ENCODE measurements at regions of chr20 and their contacts with region 1.

Region 1: GRCh38 chr20:50980851-50981713 is 22.5 kb downstream of the MOCS3 start:
- DNase-seq: peak; percentile 36 to 68 (median 54)
- H3K4me3 ChIP-seq: no peak overlapping the region
- H3K4me3 Mint-ChIP-seq: no peak overlapping the region
- H3K27ac ChIP-seq: no peak overlapping the region
- H3K27ac Mint-ChIP-seq: no peak overlapping the region
- H3K4me1 ChIP-seq: peaks cover 4% of the 10 kb centered on the region
- H3K4me1 Mint-ChIP-seq: peaks cover 3 to 6% (median 4%) of the 10 kb centered on the region in 3 donors
- H3K27me3 ChIP-seq: peaks cover 6% of the 10 kb centered on the region
- H3K27me3 Mint-ChIP-seq: peaks cover 37 to 58% of the 10 kb centered on the region in 2 donors

Region 2: GRCh38 chr20:50958615-50959542 is 22.2 kb before region 1 on chr20 and contains the start of gene MOCS3:
- CTCF ChIA-PET with region 1: interaction called, 10 read pairs
- POLR2A ChIA-PET with region 1: no interaction called
- DNase-seq: peak; percentile 77 to 92 (median 90)
- H3K4me3 ChIP-seq: peak within 1 kb of the TSS; percentile 91
- H3K4me3 Mint-ChIP-seq: peak within 1 kb of the TSS; percentile 95 to 98 (median 98)
- H3K27ac ChIP-seq: peak within 1 kb of the TSS; percentile 97
- H3K27ac Mint-ChIP-seq: peak within 1 kb of the TSS; percentile 99 to 100 (median 100)
- H3K4me1 ChIP-seq: peaks cover 34% of the 10 kb centered on the region
- H3K4me1 Mint-ChIP-seq: peaks cover 51 to 80% (median 68%) of the 10 kb centered on the region in 3 donors
- H3K27me3 ChIP-seq: no peaks in the 10 kb centered on the region
- H3K27me3 Mint-ChIP-seq: no peaks in the 10 kb centered on the region
- total RNA-seq, gene MOCS3: 7.9 to 8.1 TPM